Activated CD4-positive, alpha-beta memory T cell treated with anti-CD3 and anti-CD28 coated beads, Interleukin-2, amount 10 ng/mL, durations not matched to agents 7 days and 5 days (primary cell): ENCODE measurements at regions of chr17 and their contacts with region 1.

Region 1: DNA sequence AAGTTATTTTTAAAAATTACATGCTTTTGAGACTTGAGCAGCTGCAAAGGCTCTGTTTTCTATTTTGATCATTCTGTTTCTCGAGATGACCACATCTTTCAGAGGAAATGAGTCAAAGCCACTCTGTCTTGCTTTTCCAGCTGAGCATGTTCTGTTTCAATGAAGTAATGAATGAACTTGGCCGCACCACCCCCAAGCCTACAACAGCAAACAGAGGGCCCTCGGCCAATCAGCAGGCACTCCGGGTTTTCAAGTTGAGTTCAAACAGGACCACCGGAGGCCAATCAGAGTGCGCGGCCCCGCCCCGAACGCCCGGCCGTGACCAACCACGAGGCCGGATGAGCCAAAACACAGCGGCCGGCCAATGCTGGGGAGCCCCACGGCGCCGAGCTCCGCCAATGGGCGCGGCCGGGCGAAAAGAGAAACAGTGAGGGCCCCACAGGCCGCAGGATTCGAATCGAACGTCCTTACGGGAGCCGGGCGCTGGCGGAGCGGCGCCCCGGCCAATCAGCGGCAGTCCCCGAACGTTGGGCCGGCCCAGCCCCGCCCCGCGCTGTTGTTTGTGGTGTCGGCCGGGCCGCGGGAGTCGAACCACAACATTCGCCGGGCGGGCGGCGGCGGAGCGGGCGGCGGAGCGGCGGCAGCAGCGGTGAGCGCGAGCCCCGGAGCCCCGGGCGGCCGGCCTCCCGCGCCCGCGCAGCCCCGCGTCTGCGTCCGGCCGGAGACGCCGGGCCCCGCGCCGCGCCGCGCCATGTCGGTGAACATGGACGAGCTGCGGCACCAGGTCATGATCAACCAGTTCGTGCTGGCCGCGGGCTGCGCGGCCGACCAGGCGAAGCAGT is at the start of gene UBALD2:
- DNase-seq: peak; percentile 100
- H3K4me3 Mint-ChIP-seq: peak within 1 kb of the TSS; percentile 96
- H3K27ac Mint-ChIP-seq: peak within 1 kb of the TSS; percentile 99
- H3K4me1 Mint-ChIP-seq: peaks cover 56% of the 10 kb centered on the region
- H3K27me3 Mint-ChIP-seq: no peaks in the 10 kb centered on the region
- total RNA-seq, gene UBALD2: 524 to 546 TPM

Region 2: GRCh38 chr17:76005263-76006149 is 259.5 kb before region 1 on chr17:
- CTCF ChIA-PET with region 1: no interaction called
- POLR2A ChIA-PET with region 1: no interaction called
- DNase-seq: peak; percentile 83
- H3K4me3 Mint-ChIP-seq: no peak overlapping the region
- H3K27ac Mint-ChIP-seq: no peak overlapping the region
- H3K4me1 Mint-ChIP-seq: peaks cover 6% of the 10 kb centered on the region
- H3K27me3 Mint-ChIP-seq: no peaks in the 10 kb centered on the region

Region 3: GRCh38 chr17:76121932-76122430 is 143.0 kb before region 1 on chr17:
- CTCF ChIA-PET with region 1: interaction called, 11 read pairs
- POLR2A ChIA-PET with region 1: interaction called, 222 read pairs
- DNase-seq: no peak
- H3K4me3 Mint-ChIP-seq: no peak overlapping the region
- H3K27ac Mint-ChIP-seq: peak overlapping the region; percentile 60
- H3K4me1 Mint-ChIP-seq: peaks cover 20% of the 10 kb centered on the region
- H3K27me3 Mint-ChIP-seq: no peaks in the 10 kb centered on the region

Region 4: GRCh38 chr17:76147211-76148014 is 117.6 kb before region 1 on chr17:
- CTCF ChIA-PET with region 1: interaction called, 3 read pairs
- POLR2A ChIA-PET with region 1: interaction called, 173 read pairs
- DNase-seq: no peak
- H3K4me3 Mint-ChIP-seq: no peak overlapping the region
- H3K27ac Mint-ChIP-seq: peak overlapping the region; percentile 56
- H3K4me1 Mint-ChIP-seq: peaks cover 68% of the 10 kb centered on the region
- H3K27me3 Mint-ChIP-seq: no peaks in the 10 kb centered on the region

Region 5: GRCh38 chr17:76191896-76192295 is 73.1 kb before region 1 on chr17:
- CTCF ChIA-PET with region 1: interaction called, 31 read pairs
- POLR2A ChIA-PET with region 1: interaction called, 1,244 read pairs
- DNase-seq: peak; percentile 59
- H3K4me3 Mint-ChIP-seq: peak overlapping the region; percentile 62
- H3K27ac Mint-ChIP-seq: peak overlapping the region; percentile 96
- H3K4me1 Mint-ChIP-seq: peaks cover 88% of the 10 kb centered on the region
- H3K27me3 Mint-ChIP-seq: no peaks in the 10 kb centered on the region

Region 6: DNA sequence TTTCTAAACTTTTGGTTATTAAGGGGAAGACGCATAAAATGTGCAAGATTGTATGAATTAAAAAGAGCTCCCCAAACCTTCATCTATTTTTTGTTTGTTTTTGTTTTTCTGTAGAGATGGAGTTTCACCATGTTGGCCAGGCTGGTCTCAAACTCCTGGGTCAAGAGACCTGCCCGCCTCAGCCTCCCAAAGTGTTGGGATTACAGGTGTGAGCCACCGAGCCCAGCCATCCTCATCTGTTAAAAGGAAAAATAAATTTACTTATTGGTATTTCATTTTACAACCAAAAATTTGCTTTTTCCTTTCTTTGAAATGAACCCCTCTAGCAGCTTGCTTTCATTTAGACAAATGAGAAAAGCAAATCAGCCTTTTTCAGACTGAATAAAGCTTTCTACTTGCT is 47.9 kb before region 1 on chr17:
- CTCF ChIA-PET with region 1: interaction called, 3 read pairs
- POLR2A ChIA-PET with region 1: interaction called, 398 read pairs
- DNase-seq: no peak
- H3K4me3 Mint-ChIP-seq: no peak overlapping the region
- H3K27ac Mint-ChIP-seq: no peak overlapping the region
- H3K4me1 Mint-ChIP-seq: peaks cover 39% of the 10 kb centered on the region
- H3K27me3 Mint-ChIP-seq: no peaks in the 10 kb centered on the region

Region 7: GRCh38 chr17:76240461-76241203 is 24.3 kb before region 1 on chr17 and contains the start of gene RNF157:
- CTCF ChIA-PET with region 1: interaction called, 56 read pairs
- POLR2A ChIA-PET with region 1: interaction called, 1,335 read pairs
- DNase-seq: peak; percentile 73
- H3K4me3 Mint-ChIP-seq: peak within 1 kb of the TSS; percentile 81
- H3K27ac Mint-ChIP-seq: peak within 1 kb of the TSS; percentile 85
- H3K4me1 Mint-ChIP-seq: peaks cover 74% of the 10 kb centered on the region
- H3K27me3 Mint-ChIP-seq: peaks cover 7% of the 10 kb centered on the region
- total RNA-seq, gene RNF157: 79.8 to 83.9 TPM

Region 8: DNA sequence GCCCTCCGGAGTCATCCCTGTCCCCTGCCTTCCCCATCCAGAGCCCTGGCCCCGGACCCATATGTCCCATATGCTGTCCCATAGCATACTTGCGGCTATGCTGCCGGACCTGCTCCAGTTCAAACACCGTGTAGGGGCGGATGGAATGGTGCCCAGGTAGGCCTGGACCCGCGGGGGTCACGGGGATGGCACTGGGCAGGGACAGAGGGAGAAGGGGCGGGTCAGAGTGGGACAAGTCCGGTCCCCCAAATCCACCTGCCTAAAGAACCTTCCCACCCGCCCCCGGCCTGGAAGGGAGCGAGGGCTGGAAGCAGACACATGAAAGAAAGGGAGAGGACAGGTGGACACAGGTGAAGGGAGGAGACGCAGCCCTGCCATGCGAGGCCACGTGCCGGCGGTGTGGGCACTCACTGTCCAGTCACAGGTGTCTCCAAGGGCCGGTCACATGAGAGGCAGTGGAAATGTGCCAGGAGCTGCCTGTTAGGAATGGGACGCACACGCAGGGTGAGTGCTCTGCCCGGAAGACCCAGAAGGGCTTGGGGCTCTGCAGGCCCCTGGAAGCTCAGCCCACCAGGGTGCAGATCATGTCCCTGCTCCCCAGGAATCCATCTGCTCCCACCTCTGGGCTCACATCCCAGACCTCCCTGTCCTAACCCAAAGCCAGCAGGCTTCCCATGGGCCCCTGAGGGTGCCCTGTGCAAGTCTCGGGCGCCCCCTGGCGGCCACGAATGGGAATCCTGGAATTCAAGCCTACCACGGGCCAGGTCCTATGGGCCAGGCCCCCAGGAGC is 14.2 kb after region 1 on chr17:
- CTCF ChIA-PET with region 1: interaction called, 13 read pairs
- POLR2A ChIA-PET with region 1: interaction called, 1,335 read pairs
- DNase-seq: peak; percentile 88
- H3K4me3 Mint-ChIP-seq: no peak overlapping the region
- H3K27ac Mint-ChIP-seq: no peak overlapping the region
- H3K4me1 Mint-ChIP-seq: peaks cover 13% of the 10 kb centered on the region
- H3K27me3 Mint-ChIP-seq: no peaks in the 10 kb centered on the region